B cell (primary cell): ENCODE measurements at regions of chr4 and their contacts with region 1.

Region 1: DNA sequence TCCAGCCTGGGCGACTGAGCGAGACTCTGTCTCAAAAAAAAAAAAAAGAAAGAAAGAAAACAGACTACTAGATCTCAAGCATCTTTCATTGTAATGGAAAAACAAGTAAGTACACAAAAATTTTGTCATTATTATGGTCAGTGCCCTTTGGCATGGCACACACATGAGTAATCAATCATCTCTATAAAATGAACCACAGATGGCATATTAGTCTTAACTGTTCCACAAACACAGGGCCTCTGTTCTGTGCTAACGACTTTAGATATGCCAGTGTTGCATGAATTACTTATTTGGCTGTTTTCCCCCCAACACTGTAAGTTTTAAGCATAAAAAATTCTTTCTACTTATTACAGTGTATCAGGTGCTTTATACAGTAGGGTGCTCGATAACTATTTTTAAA is 90.4 kb downstream of the COX7B2 start:
- DNase-seq: no peak
- ATAC-seq: no peak
- H3K4me3 ChIP-seq: no peak overlapping the region
- H3K4me3 Mint-ChIP-seq: no peak overlapping the region
- H3K27ac ChIP-seq: no peak overlapping the region
- H3K27ac Mint-ChIP-seq: no peak overlapping the region
- H3K4me1 ChIP-seq: no peaks in the 10 kb centered on the region
- H3K4me1 Mint-ChIP-seq: no peaks in the 10 kb centered on the region
- H3K27me3 ChIP-seq: no peaks in the 10 kb centered on the region
- H3K27me3 Mint-ChIP-seq: no peaks in the 10 kb centered on the region
- CTCF ChIP-seq: no peak

Region 2: DNA sequence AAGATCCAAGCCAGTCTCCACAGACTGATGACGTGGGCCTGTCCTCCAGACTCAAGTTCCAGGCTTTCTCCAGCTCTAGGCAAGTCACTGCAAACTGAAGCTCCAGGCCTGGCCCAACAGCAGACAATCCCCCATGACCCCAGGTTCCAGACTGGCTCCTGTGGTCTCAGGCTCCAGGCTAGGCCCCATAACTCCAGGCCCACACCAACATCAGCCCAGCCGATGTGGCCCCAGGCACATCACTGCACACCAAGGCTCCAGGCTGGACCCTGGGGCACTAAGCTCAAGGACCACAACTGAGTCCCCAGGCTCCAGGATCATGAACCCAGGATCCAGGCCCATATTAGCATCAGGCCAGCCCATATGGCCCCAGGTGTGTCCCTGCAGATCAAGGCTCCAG is 53.1 kb before region 1 on chr4:
- CTCF ChIA-PET with region 1: no interaction called
- POLR2A ChIA-PET with region 1: no interaction called
- intact Hi-C with region 1: loop called (anchors 1 kb)
- DNase-seq: no peak
- ATAC-seq: no peak
- H3K4me3 ChIP-seq: no peak overlapping the region
- H3K4me3 Mint-ChIP-seq: no peak overlapping the region
- H3K27ac ChIP-seq: no peak overlapping the region
- H3K27ac Mint-ChIP-seq: no peak overlapping the region
- H3K4me1 ChIP-seq: no peaks in the 10 kb centered on the region
- H3K4me1 Mint-ChIP-seq: no peaks in the 10 kb centered on the region
- H3K27me3 ChIP-seq: no peaks in the 10 kb centered on the region
- H3K27me3 Mint-ChIP-seq: no peaks in the 10 kb centered on the region
- CTCF ChIP-seq: no peak